Psoas muscle (tissue), 8 donors: ENCODE measurements at regions of chr12 and their contacts with region 1.

Region 1: GRCh38 chr12:13171921-13172859 is 24.3 kb upstream of the EMP1 start:
- DNase-seq: peak in 1 of 2 donors; percentile 57
- ATAC-seq: no peak
- H3K4me3 ChIP-seq: no peak overlapping the region
- H3K27ac ChIP-seq: peak overlapping the region; percentile 30
- H3K4me1 ChIP-seq: no peaks in the 10 kb centered on the region
- H3K27me3 ChIP-seq: peaks cover 0 to 6% (median 0%) of the 10 kb centered on the region in 3 donors
- CTCF ChIP-seq: no peak

Region 2: DNA sequence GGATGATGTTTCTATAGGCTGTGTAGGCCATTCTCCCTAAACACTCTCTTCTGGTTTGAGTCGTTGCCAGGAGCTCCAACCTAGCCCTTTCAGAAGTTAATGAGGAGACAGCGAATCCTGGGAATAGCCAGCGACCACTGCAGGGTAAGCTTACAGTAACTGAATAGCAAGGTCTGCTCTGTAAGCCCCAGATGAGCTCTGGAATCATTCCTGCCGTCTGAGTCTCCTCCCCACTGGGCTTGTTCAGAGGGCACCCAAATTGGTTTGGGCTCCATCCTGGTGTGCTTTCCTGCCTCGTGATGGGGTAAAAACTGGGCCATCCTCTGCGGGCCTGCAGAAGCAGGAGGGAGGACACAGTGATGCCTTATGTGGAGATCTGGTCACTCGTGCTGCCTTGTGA is 19.0 kb before region 1 on chr12:
- intact Hi-C with region 1: loop called in 1 of 2 experiments (anchors 1 kb)
- DNase-seq: no peak
- ATAC-seq: no peak
- H3K4me3 ChIP-seq: no peak overlapping the region
- H3K27ac ChIP-seq: no peak overlapping the region
- H3K4me1 ChIP-seq: no peaks in the 10 kb centered on the region
- H3K27me3 ChIP-seq: peaks cover 0 to 1% (median 0%) of the 10 kb centered on the region in 3 donors
- CTCF ChIP-seq: no peak